ENCODE measurements at regions of chr5 and their contacts with region 1.

Region 1: DNA sequence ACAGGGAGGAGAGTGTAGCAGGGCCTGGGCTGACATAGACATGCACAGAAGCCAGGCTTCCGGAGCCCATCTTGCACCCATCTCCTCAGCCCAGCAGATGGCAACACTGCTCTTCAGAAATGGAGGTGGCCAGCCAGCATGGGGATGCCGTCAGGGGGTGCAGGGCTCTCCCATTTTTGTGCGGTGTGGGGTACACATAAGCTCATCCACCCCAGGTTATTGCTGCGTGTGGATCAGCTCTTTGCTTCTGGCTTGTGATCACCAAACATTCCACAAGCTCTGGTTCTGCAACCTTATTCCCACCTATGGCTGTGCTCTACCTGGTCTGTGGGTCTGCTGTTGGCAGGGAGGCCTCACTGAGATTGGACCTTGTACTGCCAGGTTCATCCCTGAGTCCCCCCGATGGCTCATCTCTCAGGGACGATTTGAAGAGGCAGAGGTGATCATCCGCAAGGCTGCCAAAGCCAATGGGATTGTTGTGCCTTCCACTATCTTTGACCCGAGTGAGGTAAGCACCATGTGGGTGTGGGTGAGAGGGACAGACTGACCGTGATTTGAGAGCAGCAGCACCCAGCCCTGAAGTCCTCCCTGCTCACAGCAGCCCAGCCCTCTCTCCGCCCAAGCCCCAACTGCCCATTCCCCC is 17.3 kb downstream of the SLC22A5 start:
- DNase-seq: peak in 1 of 2 donors; percentile 86
- H3K4me3 ChIP-seq: no peak overlapping the region
- H3K27ac ChIP-seq: peak overlapping the region; percentile 84 to 95
- H3K4me1 ChIP-seq: peaks cover 31 to 48% of the 10 kb centered on the region in 2 donors
- H3K27me3 ChIP-seq: no peaks in the 10 kb centered on the region
- CTCF ChIP-seq: peak; percentile 77 to 83 (median 79)

Region 2: GRCh38 chr5:132410451-132411381 is 24.0 kb after region 1 on chr5:
- intact Hi-C with region 1: loop called (anchors 2 kb)
- DNase-seq: peak; percentile 63 to 90
- H3K4me3 ChIP-seq: peak overlapping the region; percentile 88 to 96
- H3K27ac ChIP-seq: peak overlapping the region; percentile 97 to 100
- H3K4me1 ChIP-seq: peaks cover 0 to 43% of the 10 kb centered on the region in 2 donors
- H3K27me3 ChIP-seq: no peaks in the 10 kb centered on the region
- CTCF ChIP-seq: peak; percentile 46 to 65 (median 56)

Region 3: GRCh38 chr5:132490486-132491367 is 104.0 kb after region 1 on chr5 and contains the start of gene IRF1:
- intact Hi-C with region 1: loop called (anchors 2 kb)
- DNase-seq: peak; percentile 92 to 99
- H3K4me3 ChIP-seq: peak within 1 kb of the TSS; percentile 87 to 94
- H3K27ac ChIP-seq: peak within 1 kb of the TSS; percentile 95 to 98
- H3K4me1 ChIP-seq: peaks cover 5 to 26% of the 10 kb centered on the region in 2 donors
- H3K27me3 ChIP-seq: no peaks in the 10 kb centered on the region
- CTCF ChIP-seq: peak in 2 of 3 experiments; percentile 4 to 9
- total RNA-seq, gene IRF1: 57.7 TPM

Region 4: DNA sequence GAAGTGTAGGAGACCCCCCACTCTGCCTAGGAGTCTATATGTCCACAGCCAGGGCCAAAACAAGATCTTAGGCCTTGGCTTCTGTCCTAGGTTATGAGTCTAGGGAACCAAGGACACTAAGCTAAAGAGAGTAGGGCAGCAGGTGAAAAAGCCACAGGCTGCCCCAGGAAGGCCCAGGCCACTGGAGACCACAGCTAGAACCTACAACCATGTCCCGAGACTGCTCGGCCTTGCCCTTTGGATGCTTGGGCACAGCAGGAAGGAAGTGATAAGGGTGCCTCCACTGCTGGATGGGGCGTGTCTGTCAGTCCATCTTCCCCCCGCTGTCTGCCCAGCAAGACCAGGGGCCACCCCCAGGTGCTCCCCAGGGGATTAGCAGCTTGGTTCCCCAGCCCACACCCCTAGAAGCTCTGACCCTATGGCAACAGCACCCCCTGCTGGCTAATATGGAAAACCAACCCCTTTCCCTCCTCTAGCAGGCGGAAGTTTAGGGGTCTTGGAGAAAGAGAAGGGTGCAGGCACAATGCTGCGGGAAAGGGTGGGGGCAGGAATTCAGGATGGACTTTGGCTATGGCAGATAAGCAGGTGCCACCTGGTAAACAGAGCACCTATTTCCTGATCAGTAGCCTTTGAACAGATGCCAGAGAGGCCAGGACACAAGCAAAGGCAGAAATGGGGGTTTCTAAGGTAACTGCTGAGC is 114.3 kb after region 1 on chr5:
- intact Hi-C with region 1: loop called (anchors 1 kb)
- DNase-seq: peak in 1 of 2 donors; percentile 70
- H3K4me3 ChIP-seq: no peak overlapping the region
- H3K27ac ChIP-seq: peak overlapping the region; percentile 16 to 32
- H3K4me1 ChIP-seq: peaks cover 15 to 19% of the 10 kb centered on the region in 2 donors
- H3K27me3 ChIP-seq: no peaks in the 10 kb centered on the region
- CTCF ChIP-seq: peak; percentile 78 to 86 (median 79)

Region 5: GRCh38 chr5:132674671-132675506 is 288.1 kb after region 1 on chr5:
- intact Hi-C with region 1: loop called (anchors 1 kb)
- DNase-seq: peak in 1 of 2 donors; percentile 73
- H3K4me3 ChIP-seq: peak overlapping the region; percentile 29 to 54
- H3K27ac ChIP-seq: peak overlapping the region; percentile 95 to 96
- H3K4me1 ChIP-seq: peaks cover 9 to 23% of the 10 kb centered on the region in 2 donors
- H3K27me3 ChIP-seq: no peaks in the 10 kb centered on the region
- CTCF ChIP-seq: no peak

Measured in ascending aorta (tissue), 2 donors.